Transverse colon (tissue), 4 donors: ENCODE measurements at regions of chr13 and their contacts with region 1.

Region 1: GRCh38 chr13:30114571-30115256 is 192.6 kb downstream of the KATNAL1 start:
- DNase-seq: peak; percentile 95
- H3K4me3 ChIP-seq: peak overlapping the region; percentile 32 to 76 (median 70)
- H3K27ac ChIP-seq: peak overlapping the region; percentile 82 to 90 (median 88)
- H3K4me1 ChIP-seq: peaks cover 23 to 40% (median 28%) of the 10 kb centered on the region in 4 donors
- H3K27me3 ChIP-seq: no peaks in the 10 kb centered on the region
- CTCF ChIP-seq: peak; percentile 84 to 95 (median 90)
- EP300 ChIP-seq: no peak
- POLR2A ChIP-seq: no peak

Region 2: GRCh38 chr13:29513397-29514322 is 601.1 kb before region 1 on chr13:
- in situ Hi-C with region 1: loop called (anchors 10 to 25 kb)
- intact Hi-C with region 1: loop called (anchors 5 kb)
- DNase-seq: no peak
- H3K4me3 ChIP-seq: no peak overlapping the region
- H3K27ac ChIP-seq: no peak overlapping the region
- H3K4me1 ChIP-seq: peaks cover 0 to under 1% (median 0%) of the 10 kb centered on the region in 4 donors
- H3K27me3 ChIP-seq: no peaks in the 10 kb centered on the region
- CTCF ChIP-seq: no peak
- EP300 ChIP-seq: no peak
- POLR2A ChIP-seq: no peak

Region 3: DNA sequence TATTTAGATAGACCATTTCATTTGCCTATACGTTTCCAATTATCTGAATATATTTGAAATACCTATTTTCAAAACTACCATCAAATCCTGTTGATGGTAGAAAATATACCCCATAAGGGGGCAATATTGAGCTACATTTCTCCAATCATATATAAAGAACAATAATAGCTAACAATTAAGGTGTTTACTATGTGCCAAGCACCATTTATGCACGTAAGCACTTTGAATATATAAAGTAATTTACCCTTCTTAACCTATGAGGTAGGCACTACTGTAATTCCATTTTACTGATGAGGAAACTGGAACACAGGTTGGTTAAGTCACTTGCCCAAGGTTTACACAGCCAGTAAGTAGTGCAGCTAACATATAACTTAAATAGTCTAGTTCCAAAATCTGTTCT is 343.5 kb before region 1 on chr13:
- in situ Hi-C with region 1: loop called (anchors 5 to 10 kb)
- intact Hi-C with region 1: loop called (anchors 1 kb)
- DNase-seq: no peak
- H3K4me3 ChIP-seq: no peak overlapping the region
- H3K27ac ChIP-seq: no peak overlapping the region
- H3K4me1 ChIP-seq: peaks cover 0 to 5% (median 0%) of the 10 kb centered on the region in 4 donors
- H3K27me3 ChIP-seq: no peaks in the 10 kb centered on the region
- CTCF ChIP-seq: peak; percentile 40 to 62 (median 45)
- EP300 ChIP-seq: no peak
- POLR2A ChIP-seq: no peak

Region 4: DNA sequence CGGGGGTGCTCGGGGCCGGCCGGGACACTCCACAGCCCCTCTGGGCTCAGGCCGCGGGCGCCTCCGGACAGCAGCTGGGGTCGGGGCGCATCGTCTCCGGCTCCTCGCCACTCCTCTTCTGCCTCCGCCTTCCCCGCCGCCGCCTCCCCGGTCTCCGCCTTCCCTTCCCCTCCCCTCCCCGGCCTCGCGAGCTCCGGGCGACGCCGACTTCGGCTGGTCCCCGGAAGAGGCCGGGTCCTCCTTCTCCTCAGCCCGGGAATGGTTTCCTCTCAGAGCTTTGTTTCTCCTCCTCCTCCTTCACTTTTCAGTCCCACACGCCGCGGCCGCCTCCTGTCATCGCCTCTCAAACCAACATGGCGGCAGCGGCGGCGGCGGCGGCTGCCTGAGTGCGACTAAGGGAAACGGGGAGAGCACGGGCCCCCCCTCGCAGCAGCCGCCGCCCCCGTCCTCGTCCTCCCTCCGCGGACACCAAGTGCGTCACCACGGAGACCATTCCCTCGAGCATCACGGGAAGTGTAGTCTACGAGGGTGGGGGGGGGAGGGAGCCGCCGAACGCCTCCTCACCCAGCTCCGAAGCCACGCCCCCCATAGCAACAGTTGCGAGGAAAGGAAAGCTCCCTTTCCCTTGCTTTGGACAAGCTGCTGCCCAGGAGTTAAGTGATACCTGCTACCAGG is 264.4 kb before region 1 on chr13 and contains the start of gene UBL3:
- in situ Hi-C with region 1: loop called in 2 of 4 experiments (anchors 5 to 10 kb)
- intact Hi-C with region 1: no loop called
- DNase-seq: peak; percentile 98
- H3K4me3 ChIP-seq: peak within 1 kb of the TSS; percentile 73 to 91 (median 82)
- H3K27ac ChIP-seq: peak within 1 kb of the TSS; percentile 96 to 99 (median 98)
- H3K4me1 ChIP-seq: peaks cover 6 to 23% (median 13%) of the 10 kb centered on the region in 4 donors
- H3K27me3 ChIP-seq: no peaks in the 10 kb centered on the region
- CTCF ChIP-seq: no peak
- EP300 ChIP-seq: no peak
- POLR2A ChIP-seq: peak; percentile 97
- total RNA-seq, gene UBL3: 8.8 to 77.1 (median 60.0) TPM

Region 5: GRCh38 chr13:30145709-30146367 is 31.1 kb after region 1 on chr13:
- in situ Hi-C with region 1: no loop called
- intact Hi-C with region 1: loop called (anchors 1 kb)
- DNase-seq: no peak
- H3K4me3 ChIP-seq: no peak overlapping the region
- H3K27ac ChIP-seq: no peak overlapping the region
- H3K4me1 ChIP-seq: peaks cover 10 to 29% (median 15%) of the 10 kb centered on the region in 4 donors
- H3K27me3 ChIP-seq: no peaks in the 10 kb centered on the region
- CTCF ChIP-seq: no peak
- EP300 ChIP-seq: no peak
- POLR2A ChIP-seq: no peak